ENCODE measurements at regions of chr5 and their contacts with region 1.

Region 1: DNA sequence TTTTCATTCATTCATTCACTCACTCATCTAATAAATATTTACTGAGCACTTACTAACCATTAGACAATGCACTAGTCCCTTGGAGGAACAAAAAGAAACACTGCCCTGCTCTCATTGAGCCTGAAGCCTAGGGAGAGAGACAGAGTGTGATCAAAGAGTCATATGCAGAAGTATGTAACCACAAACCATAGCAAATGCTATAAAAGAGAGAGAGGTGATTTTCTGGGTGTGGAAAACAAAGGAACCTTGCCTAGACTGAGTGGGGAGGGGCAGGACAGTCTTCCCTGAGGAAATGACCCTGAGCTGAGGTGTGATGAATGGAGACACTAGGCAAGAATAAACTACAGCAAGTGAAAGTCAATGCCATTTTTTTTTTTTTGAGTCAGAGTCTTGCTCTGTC is 10.8 kb upstream of the ADRA1B start:
- DNase-seq: no peak
- H3K4me3 ChIP-seq: no peak overlapping the region
- H3K27ac ChIP-seq: no peak overlapping the region
- H3K4me1 ChIP-seq: no peaks in the 10 kb centered on the region
- H3K27me3 ChIP-seq: no peaks in the 10 kb centered on the region
- CTCF ChIP-seq: no peak
- POLR2A ChIP-seq: no peak

Region 2: GRCh38 chr5:159833088-159833487 is 72.4 kb before region 1 on chr5:
- intact Hi-C with region 1: loop called (anchors 2 kb)
- DNase-seq: no peak
- H3K4me3 ChIP-seq: no peak overlapping the region
- H3K27ac ChIP-seq: no peak overlapping the region
- H3K4me1 ChIP-seq: no peaks in the 10 kb centered on the region
- H3K27me3 ChIP-seq: no peaks in the 10 kb centered on the region
- CTCF ChIP-seq: no peak
- POLR2A ChIP-seq: no peak

Region 3: DNA sequence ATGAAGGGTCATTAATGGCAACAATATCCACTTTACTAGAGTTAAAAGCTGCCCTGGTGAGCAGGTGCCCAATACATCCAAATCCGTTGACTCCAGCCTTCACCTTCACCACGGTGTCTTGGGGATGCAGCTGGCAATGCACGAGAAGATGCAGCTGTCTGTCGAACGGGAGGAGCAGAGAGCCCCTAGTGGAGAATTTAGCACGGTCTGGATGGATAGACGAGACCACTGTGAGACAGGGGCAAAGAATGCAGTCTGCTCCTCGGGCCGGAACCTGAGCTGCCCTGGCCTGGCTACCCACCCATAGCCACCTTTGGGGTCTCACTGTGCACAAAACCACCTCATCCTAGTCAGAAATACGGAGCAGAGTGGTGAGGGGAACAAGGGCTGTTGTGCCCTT is 45.9 kb after region 1 on chr5:
- intact Hi-C with region 1: no loop called
- DNase-seq: no peak
- H3K4me3 ChIP-seq: no peak overlapping the region
- H3K27ac ChIP-seq: no peak overlapping the region
- H3K4me1 ChIP-seq: no peaks in the 10 kb centered on the region
- H3K27me3 ChIP-seq: no peaks in the 10 kb centered on the region
- CTCF ChIP-seq: no peak
- POLR2A ChIP-seq: no peak